Naive thymus-derived CD4-positive, alpha-beta T cell (primary cell): ENCODE measurements at regions of chr6 and their contacts with region 1.

Region 1: DNA sequence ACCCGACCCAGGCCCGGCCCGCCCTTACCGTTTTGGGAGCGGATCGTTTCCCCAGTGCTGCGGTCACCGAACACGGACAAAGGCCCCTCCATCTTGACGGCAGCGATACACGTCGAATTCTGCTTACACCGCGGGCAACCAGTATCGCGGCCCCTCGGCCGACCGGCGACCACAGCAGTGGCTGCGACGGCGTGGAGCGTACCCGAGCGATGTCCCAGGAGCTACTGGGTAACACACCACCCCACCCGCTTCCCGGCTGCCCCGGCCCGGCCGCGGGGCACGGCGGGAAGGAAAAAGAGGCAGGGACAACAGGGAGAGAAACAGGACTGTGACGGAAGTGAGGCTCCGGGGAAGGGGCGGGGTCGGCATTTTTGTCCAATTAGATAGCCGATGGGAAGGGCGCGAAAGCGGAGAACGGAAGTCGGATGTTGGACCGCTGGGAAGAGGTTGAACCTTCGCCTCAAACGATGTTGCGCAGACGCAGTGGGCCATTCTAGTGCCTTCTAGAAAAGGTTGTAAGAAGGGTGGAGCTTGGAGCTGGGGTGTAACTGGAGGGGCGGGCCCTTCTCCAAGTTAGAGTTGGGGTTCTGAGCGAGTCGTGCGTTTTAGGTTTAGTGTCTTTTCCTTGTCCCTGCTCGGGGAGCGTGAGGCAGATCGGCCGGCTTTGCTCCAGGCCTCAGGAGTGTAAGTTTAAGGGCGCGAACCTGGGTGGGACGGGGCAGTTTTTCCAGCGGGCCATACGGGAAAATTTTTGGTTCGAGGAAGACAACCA is at the start of gene TCP1:
- DNase-seq: peak; percentile 87 to 99 (median 98)
- ATAC-seq: peak; percentile 89
- H3K4me3 ChIP-seq: peak within 1 kb of the TSS; percentile 98
- H3K4me3 Mint-ChIP-seq: peak within 1 kb of the TSS; percentile 94 to 100 (median 99)
- H3K27ac ChIP-seq: peak within 1 kb of the TSS; percentile 94
- H3K27ac Mint-ChIP-seq: peak within 1 kb of the TSS; percentile 95 to 99 (median 98)
- H3K4me1 ChIP-seq: peaks cover 15 to 27% of the 10 kb centered on the region in 2 donors
- H3K4me1 Mint-ChIP-seq: peaks cover 41 to 83% (median 69%) of the 10 kb centered on the region in 7 donors
- H3K27me3 ChIP-seq: no peaks in the 10 kb centered on the region
- H3K27me3 Mint-ChIP-seq: peaks cover 0 to 3% (median 0%) of the 10 kb centered on the region in 5 donors
- total RNA-seq, gene TCP1: 147 to 225 (median 154) TPM

Region 2: GRCh38 chr6:159726918-159727716 is 62.4 kb before region 1 on chr6 and contains the start of gene WTAP:
- CTCF ChIA-PET with region 1: interaction called, 4 read pairs
- POLR2A ChIA-PET with region 1: interaction called, 94 read pairs
- intact Hi-C with region 1: loop called (anchors 1 kb)
- DNase-seq: peak; percentile 83 to 97 (median 97)
- ATAC-seq: peak; percentile 93
- H3K4me3 ChIP-seq: peak within 1 kb of the TSS; percentile 89
- H3K4me3 Mint-ChIP-seq: peak within 1 kb of the TSS; percentile 87 to 97 (median 95)
- H3K27ac ChIP-seq: peak within 1 kb of the TSS; percentile 91
- H3K27ac Mint-ChIP-seq: peak within 1 kb of the TSS; percentile 95 to 100 (median 99)
- H3K4me1 ChIP-seq: peaks cover 33 to 34% of the 10 kb centered on the region in 2 donors
- H3K4me1 Mint-ChIP-seq: peaks cover 34 to 79% (median 67%) of the 10 kb centered on the region in 7 donors
- H3K27me3 ChIP-seq: no peaks in the 10 kb centered on the region
- H3K27me3 Mint-ChIP-seq: peaks cover 0 to 6% (median 0%) of the 10 kb centered on the region in 5 donors
- total RNA-seq, gene WTAP: 117 to 152 (median 141) TPM

Region 3: GRCh38 chr6:159833556-159833955 is 44.0 kb after region 1 on chr6:
- CTCF ChIA-PET with region 1: no interaction called
- POLR2A ChIA-PET with region 1: interaction called, 13 read pairs
- intact Hi-C with region 1: no loop called
- DNase-seq: no peak
- ATAC-seq: no peak
- H3K4me3 ChIP-seq: no peak overlapping the region
- H3K4me3 Mint-ChIP-seq: peak overlapping the region in 2 of 10 donors; percentile 25 to 47
- H3K27ac ChIP-seq: no peak overlapping the region
- H3K27ac Mint-ChIP-seq: peak overlapping the region in 7 of 9 donors; percentile 51 to 80 (median 71)
- H3K4me1 ChIP-seq: peaks cover 0 to 33% of the 10 kb centered on the region in 2 donors
- H3K4me1 Mint-ChIP-seq: peaks cover 9 to 53% (median 38%) of the 10 kb centered on the region in 7 donors
- H3K27me3 ChIP-seq: no peaks in the 10 kb centered on the region
- H3K27me3 Mint-ChIP-seq: peaks cover 0 to 17% (median 0%) of the 10 kb centered on the region in 5 donors

Region 4: DNA sequence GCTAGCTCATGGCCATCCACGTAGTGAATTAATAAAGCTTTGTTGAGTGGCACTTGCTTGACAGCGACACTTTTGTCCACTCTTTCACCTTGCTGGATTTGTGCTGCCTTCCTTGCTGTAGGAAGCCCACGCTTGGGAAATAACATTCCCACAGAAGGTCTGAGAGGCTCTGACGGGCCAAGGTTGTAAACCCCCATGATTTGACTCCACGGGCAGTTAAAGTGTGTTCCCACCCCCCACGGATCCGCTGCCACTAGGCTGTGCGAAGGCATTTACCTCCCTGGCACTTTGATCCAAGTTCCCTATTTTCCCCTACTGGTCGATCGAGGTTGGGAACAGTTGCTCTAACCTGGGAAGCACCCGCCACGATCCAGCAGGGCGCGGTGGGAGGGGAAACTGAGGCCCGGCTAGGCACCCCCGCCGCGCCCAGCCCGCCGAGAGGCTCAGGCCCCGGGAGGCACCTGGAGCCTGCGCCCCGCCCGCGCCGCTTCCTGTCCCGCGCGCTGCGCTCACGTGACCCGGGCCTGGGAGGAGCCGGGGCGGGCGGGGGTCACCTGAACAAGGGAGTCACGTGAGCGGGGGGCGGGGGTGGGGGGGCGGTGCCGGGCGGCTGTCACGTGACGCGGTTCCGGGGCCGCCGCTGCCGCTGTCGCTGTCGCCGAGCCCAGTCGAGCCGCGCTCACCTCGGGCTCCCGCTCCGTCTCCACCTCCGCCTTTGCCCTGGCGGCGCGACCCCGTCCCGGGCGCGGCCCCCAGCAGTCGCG is 179.1 kb after region 1 on chr6 and contains the start of gene IGF2R:
- CTCF ChIA-PET with region 1: no interaction called
- POLR2A ChIA-PET with region 1: interaction called, 9 read pairs
- intact Hi-C with region 1: loop called (anchors 1 kb)
- DNase-seq: peak; percentile 88 to 94 (median 92)
- ATAC-seq: peak; percentile 95
- H3K4me3 ChIP-seq: peak within 1 kb of the TSS; percentile 69
- H3K4me3 Mint-ChIP-seq: peak within 1 kb of the TSS; percentile 88 to 98 (median 92)
- H3K27ac ChIP-seq: peak within 1 kb of the TSS; percentile 82
- H3K27ac Mint-ChIP-seq: peak within 1 kb of the TSS; percentile 89 to 97 (median 94)
- H3K4me1 ChIP-seq: peaks cover 18 to 28% of the 10 kb centered on the region in 2 donors
- H3K4me1 Mint-ChIP-seq: peaks cover 27 to 43% (median 37%) of the 10 kb centered on the region in 7 donors
- H3K27me3 ChIP-seq: no peaks in the 10 kb centered on the region
- H3K27me3 Mint-ChIP-seq: peaks cover 0 to 30% (median 0%) of the 10 kb centered on the region in 5 donors
- total RNA-seq, gene IGF2R: 59.1 to 79.2 (median 74.2) TPM

Region 5: DNA sequence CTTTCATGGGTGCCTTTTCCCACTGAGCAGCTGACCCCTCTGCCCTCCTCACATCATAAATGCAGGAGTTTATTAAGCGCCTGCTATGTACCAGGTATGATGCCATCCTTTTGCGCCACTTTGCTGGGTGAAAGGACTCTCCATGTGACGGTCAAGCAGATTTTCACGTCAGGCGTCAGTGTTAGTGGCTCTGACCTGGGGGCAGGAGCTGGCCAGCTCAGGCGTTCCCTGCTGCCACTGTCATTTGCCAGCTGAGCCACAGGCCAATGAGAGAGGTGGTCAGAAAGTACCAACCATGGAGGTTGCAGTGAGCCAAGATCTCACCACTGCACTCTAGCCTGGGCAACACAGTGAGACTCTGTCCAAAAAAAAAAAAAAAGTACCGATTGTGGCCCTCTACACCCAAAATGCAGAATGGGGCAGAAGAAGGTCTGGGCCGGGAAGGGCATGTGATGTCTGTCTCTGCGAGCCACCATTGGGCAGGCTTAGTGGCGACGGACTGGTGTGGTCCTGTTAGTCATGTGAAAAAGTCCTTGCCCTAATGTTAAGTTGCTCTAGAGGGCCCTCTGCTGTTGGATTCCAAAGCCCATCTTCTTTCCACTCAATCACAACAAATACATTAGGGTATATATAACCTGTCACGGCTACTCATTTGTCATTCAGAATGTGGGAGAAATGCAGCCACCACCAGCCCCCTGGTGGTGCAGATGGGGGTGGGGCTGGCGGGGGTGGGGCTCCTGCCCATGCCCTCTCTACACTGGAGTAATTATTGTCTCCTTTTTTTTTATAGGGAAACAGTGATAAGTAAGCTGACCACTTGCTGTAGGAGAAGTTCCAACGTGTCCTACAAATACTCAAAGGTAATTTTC is 313.6 kb after region 1 on chr6:
- CTCF ChIA-PET with region 1: interaction called, 3 read pairs
- POLR2A ChIA-PET with region 1: no interaction called
- intact Hi-C with region 1: loop called in 1 of 2 experiments (anchors 1 kb)
- DNase-seq: peak in 2 of 9 donors; percentile 5 to 20
- ATAC-seq: peak; percentile 55
- H3K4me3 ChIP-seq: no peak overlapping the region
- H3K4me3 Mint-ChIP-seq: no peak overlapping the region
- H3K27ac ChIP-seq: no peak overlapping the region
- H3K27ac Mint-ChIP-seq: peak overlapping the region in 2 of 9 donors; percentile 12 to 19
- H3K4me1 ChIP-seq: no peaks in the 10 kb centered on the region
- H3K4me1 Mint-ChIP-seq: peaks cover 4 to 34% (median 22%) of the 10 kb centered on the region in 7 donors
- H3K27me3 ChIP-seq: no peaks in the 10 kb centered on the region
- H3K27me3 Mint-ChIP-seq: no peaks in the 10 kb centered on the region

Region 6: DNA sequence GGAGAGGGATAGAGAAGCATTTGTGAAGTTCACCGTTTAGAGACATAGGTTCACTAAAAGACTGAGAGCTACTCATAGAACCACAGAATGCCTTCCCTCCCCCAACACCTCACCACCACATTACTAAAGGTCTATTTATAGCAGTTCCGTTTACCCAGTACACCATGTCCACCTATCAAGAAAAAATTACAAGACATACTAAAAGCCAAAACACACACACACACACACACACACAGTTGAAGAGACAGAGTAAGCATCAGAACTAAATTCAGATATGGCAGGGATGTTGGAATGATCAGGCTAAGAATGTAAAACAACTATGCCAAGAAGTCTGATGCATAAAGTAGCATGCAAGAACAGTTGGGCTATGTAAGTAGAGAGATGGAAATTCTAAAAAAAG is 610.9 kb after region 1 on chr6:
- CTCF ChIA-PET with region 1: no interaction called
- POLR2A ChIA-PET with region 1: no interaction called
- intact Hi-C with region 1: no loop called
- DNase-seq: no peak
- ATAC-seq: no peak
- H3K4me3 ChIP-seq: no peak overlapping the region
- H3K4me3 Mint-ChIP-seq: no peak overlapping the region
- H3K27ac ChIP-seq: no peak overlapping the region
- H3K27ac Mint-ChIP-seq: no peak overlapping the region
- H3K4me1 ChIP-seq: peaks cover 0 to 5% of the 10 kb centered on the region in 2 donors
- H3K4me1 Mint-ChIP-seq: peaks cover 0 to 8% (median 0%) of the 10 kb centered on the region in 7 donors
- H3K27me3 ChIP-seq: no peaks in the 10 kb centered on the region
- H3K27me3 Mint-ChIP-seq: peaks cover 11 to 38% (median 14%) of the 10 kb centered on the region in 5 donors